ENCODE measurements at regions of chr5 and their contacts with region 1.

Region 1: GRCh38 chr5:164649266-164649665 is 1143.8 kb downstream of the MAT2B start:
- DNase-seq: no peak

Region 2: DNA sequence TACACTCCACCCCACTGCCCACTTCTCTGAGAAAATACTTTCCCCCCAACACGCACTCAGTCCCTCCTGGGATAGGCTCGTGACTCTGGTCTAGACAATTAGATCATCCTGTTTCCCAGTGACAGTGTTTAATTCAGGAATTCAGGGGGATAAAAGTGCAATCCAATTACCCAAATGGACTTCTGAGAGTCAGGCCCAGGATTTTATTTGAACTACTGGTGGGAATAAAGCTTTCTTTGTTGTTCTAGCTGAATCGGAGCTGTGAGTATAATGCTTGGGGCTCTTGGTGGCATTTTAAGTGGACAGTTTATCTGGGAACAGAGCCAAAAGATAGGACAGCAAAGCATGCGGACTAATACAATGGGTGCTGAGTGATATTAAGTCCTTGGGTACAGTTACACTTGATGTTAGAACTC is 460.5 kb before region 1 on chr5:
- intact Hi-C with region 1: loop called in 1 of 2 experiments (anchors 5 kb)
- DNase-seq: no peak